B cell (primary cell): ENCODE measurements at regions of chr17 and their contacts with region 1.

Region 1: GRCh38 chr17:41199421-41200078 is 9.9 kb downstream of the KRTAP9-1 start:
- DNase-seq: no peak
- ATAC-seq: no peak
- H3K4me3 ChIP-seq: no peak overlapping the region
- H3K4me3 Mint-ChIP-seq: no peak overlapping the region
- H3K27ac ChIP-seq: no peak overlapping the region
- H3K27ac Mint-ChIP-seq: no peak overlapping the region
- H3K4me1 ChIP-seq: no peaks in the 10 kb centered on the region
- H3K4me1 Mint-ChIP-seq: no peaks in the 10 kb centered on the region
- H3K27me3 ChIP-seq: no peaks in the 10 kb centered on the region
- H3K27me3 Mint-ChIP-seq: peaks cover 12% of the 10 kb centered on the region
- CTCF ChIP-seq: no peak

Region 2: GRCh38 chr17:40963838-40964237 is 235.7 kb before region 1 on chr17:
- CTCF ChIA-PET with region 1: no interaction called
- POLR2A ChIA-PET with region 1: no interaction called
- intact Hi-C with region 1: loop called (anchors 10 kb)
- DNase-seq: peak; percentile 28
- ATAC-seq: no peak
- H3K4me3 ChIP-seq: no peak overlapping the region
- H3K4me3 Mint-ChIP-seq: no peak overlapping the region
- H3K27ac ChIP-seq: no peak overlapping the region
- H3K27ac Mint-ChIP-seq: no peak overlapping the region
- H3K4me1 ChIP-seq: no peaks in the 10 kb centered on the region
- H3K4me1 Mint-ChIP-seq: no peaks in the 10 kb centered on the region
- H3K27me3 ChIP-seq: no peaks in the 10 kb centered on the region
- H3K27me3 Mint-ChIP-seq: peaks cover 30% of the 10 kb centered on the region
- CTCF ChIP-seq: peak; percentile 70

Region 3: DNA sequence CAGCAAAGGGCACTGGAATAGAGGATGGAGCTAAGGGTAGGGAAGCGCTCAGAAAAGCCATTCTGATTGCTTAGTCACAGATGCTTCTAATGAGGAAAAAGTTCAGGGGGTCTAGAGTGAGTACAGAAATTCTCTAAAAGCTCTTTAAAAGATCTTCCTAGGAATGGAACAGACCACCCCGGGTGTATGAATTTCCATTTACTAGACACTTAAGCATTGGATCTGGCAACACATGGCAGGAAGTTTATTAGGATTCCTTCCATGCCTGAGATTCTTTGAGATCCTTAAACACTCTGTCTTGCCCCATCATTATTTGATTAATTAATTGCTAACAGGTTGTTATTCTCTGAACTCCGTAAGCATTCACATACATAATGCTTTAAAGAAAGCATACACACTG is 84.5 kb after region 1 on chr17:
- CTCF ChIA-PET with region 1: no interaction called
- POLR2A ChIA-PET with region 1: no interaction called
- intact Hi-C with region 1: no loop called
- DNase-seq: peak; percentile 0
- ATAC-seq: no peak
- H3K4me3 ChIP-seq: no peak overlapping the region
- H3K4me3 Mint-ChIP-seq: no peak overlapping the region
- H3K27ac ChIP-seq: no peak overlapping the region
- H3K27ac Mint-ChIP-seq: no peak overlapping the region
- H3K4me1 ChIP-seq: peaks cover 0 to 4% of the 10 kb centered on the region in 2 donors
- H3K4me1 Mint-ChIP-seq: peaks cover 3% of the 10 kb centered on the region
- H3K27me3 ChIP-seq: no peaks in the 10 kb centered on the region
- H3K27me3 Mint-ChIP-seq: peaks cover 34% of the 10 kb centered on the region
- CTCF ChIP-seq: no peak